GM12878 (cell line): ENCODE measurements at regions of chr7 and their contacts with region 1.

Region 1: DNA sequence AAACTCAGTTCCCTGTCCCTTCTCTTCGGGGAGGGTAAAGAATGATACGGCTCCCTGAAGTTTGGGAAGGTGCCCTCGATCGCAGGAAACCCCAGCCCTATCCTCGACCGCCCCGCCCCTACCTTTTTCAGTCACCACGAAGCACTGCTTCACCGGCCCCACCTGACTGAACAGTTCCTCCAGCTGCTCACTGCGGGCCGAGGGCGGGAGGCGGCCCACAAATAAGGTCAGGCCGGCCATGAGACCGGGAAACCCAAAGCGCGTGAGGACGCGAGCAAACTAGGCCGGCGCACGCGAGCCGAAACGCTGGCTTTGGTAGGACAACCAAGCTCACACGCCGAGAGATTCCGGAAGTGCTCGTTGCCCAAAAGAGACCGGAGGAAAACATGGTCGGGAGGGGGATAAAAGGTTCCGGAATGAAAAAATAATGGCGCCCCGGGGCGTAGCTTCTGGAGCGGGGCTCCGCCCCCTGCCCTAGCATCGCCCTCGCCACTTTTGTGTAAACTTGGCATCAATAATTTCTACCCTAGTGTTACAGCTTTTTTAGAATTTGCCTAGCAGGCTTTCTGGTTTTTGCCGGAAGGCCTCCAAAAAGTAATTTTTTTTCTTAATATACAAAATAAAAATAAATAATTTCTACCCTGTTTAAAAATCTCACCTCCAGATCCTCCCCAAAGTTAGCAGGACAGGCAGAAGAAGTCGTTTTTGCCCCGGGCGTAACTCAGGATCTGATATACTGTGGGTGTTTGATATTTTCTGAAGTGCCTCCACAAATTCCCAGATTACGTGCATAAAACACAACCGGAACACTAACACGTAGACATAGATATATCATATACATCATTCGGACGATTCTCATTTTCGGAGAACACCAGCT is at the start of gene RBM28:
- DNase-seq: peak; percentile 73
- ATAC-seq: peak; percentile 96
- H3K4me3 ChIP-seq: peak within 1 kb of the TSS; percentile 81
- H3K27ac ChIP-seq: peak within 1 kb of the TSS; percentile 51
- H3K4me1 ChIP-seq: peaks cover 9% of the 10 kb centered on the region
- H3K27me3 ChIP-seq: 0 out of 4 replicates have a peak, but pooled peaks cover 0 to under 1% of the 10 kb centered on the region in 2 experiments
- CTCF ChIP-seq: no peak
- EP300 ChIP-seq: no peak
- POLR2A ChIP-seq: peak; percentile 94
- RAD21 ChIP-seq: no peak
- polyA plus RNA-seq, gene RBM28: 17.9 to 29.6 TPM

Region 2: DNA sequence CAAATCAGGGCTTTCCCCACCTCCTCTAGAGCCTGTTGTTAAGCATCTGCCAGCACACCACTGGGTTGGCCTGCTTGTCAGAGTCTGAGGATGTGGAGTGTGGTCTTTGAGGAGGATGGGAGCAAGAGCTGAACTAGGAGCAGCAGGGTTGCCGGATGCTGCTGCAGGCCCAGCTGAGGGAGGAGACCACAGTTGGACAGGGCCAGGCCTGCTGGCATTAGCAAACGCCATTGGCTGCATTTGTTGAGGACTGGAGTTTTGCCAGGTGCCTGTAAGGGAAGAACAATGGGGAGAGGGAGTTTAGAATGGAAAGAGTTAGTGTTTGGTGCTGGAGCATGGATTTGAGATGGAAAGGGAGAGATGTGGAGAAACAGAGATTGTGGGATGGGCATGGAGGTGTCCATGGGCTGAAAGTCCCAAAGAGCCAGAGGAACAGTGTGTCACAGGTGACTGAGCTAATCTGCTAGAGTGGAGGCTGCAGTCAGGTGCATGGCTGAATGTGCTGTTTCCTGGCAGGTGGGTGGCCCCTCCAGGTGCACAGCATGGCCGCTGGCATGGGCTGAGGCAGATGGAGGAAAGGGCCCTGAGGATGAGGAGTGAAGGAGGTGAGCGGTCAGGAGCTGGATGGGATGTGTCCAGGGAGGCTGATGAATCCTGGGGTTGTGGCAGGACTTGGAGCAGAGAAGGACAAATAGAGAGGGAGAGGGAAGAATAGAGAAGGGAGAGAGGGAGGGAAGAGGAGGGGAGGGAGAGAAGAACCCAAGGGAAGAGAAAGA is 62.0 kb before region 1 on chr7:
- CTCF ChIA-PET with region 1: no interaction called
- POLR2A ChIA-PET with region 1: no interaction called
- RAD21 ChIA-PET with region 1: no interaction called
- SMC1A ChIA-PET with region 1: no interaction called
- in situ Hi-C with region 1: no loop called
- intact Hi-C with region 1: no loop called
- DNase-seq: no peak
- ATAC-seq: no peak
- H3K4me3 ChIP-seq: no peak overlapping the region
- H3K27ac ChIP-seq: no peak overlapping the region
- H3K4me1 ChIP-seq: no peaks in the 10 kb centered on the region
- H3K27me3 ChIP-seq: no peaks in the 10 kb centered on the region
- CTCF ChIP-seq: no peak
- EP300 ChIP-seq: no peak
- POLR2A ChIP-seq: no peak
- RAD21 ChIP-seq: no peak

Region 3: DNA sequence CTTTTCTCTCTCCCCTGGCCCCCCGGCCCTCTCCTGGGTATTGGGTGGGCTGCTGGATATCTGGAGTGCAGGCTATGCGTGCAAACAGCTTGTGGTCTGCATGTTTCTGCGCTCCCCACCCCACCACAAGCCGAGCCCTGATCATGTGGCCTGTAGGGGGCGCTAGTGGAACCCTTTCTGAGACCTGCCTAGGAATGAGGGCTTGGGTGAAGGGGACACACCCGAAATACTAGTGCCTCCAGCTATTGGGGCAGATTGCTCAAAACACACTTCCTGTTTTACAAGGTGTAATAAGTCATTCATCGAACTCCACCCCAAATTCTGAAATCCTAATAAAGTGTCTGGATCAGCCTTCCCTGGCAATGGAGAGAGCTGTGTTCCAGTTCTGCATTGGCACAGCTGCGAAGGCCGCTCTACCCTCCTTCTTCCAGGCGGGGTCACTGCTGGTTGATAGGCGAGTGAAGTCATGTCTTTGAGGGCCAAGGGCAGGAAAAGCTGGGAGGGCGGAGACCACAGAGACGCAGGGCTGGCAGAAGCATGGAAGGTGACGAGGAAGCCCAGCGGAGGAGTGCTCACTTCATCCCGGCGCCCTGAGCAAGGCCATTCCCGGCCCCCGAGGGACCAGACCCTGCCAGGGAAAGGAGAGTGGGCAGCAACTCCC is 37.5 kb after region 1 on chr7:
- CTCF ChIA-PET with region 1: interaction called, 106 read pairs
- POLR2A ChIA-PET with region 1: no interaction called
- RAD21 ChIA-PET with region 1: interaction called, 24 read pairs
- SMC1A ChIA-PET with region 1: no interaction called
- in situ Hi-C with region 1: no loop called
- intact Hi-C with region 1: no loop called
- DNase-seq: no peak
- ATAC-seq: peak; percentile 72
- H3K4me3 ChIP-seq: no peak overlapping the region
- H3K27ac ChIP-seq: no peak overlapping the region
- H3K4me1 ChIP-seq: no peaks in the 10 kb centered on the region
- H3K27me3 ChIP-seq: no peaks in the 10 kb centered on the region
- CTCF ChIP-seq: peak; percentile 28 to 71 (median 56)
- EP300 ChIP-seq: no peak
- POLR2A ChIP-seq: no peak
- RAD21 ChIP-seq: 0 out of 2 replicates have a peak, but pooled peaks have one; percentile 2